ENCODE measurements at regions of chr4 and their contacts with region 1.

Region 1: GRCh38 chr4:112704991-112705845 is 68.3 kb downstream of the LARP7 start:
- DNase-seq: peak; percentile 36 to 73 (median 61)
- ATAC-seq: peak; percentile 36 to 83 (median 79)
- H3K4me3 ChIP-seq: peak overlapping the region in 11 of 12 donors; percentile 21 to 92 (median 62)
- H3K27ac ChIP-seq: peak overlapping the region in 9 of 12 donors; percentile 51 to 85 (median 68)
- H3K4me1 ChIP-seq: peaks cover 0 to 17% (median 6%) of the 10 kb centered on the region in 12 donors
- H3K27me3 ChIP-seq: peaks cover 0 to 52% (median 6%) of the 10 kb centered on the region in 9 donors
- CTCF ChIP-seq: no peak
- POLR2A ChIP-seq: no peak

Region 2: DNA sequence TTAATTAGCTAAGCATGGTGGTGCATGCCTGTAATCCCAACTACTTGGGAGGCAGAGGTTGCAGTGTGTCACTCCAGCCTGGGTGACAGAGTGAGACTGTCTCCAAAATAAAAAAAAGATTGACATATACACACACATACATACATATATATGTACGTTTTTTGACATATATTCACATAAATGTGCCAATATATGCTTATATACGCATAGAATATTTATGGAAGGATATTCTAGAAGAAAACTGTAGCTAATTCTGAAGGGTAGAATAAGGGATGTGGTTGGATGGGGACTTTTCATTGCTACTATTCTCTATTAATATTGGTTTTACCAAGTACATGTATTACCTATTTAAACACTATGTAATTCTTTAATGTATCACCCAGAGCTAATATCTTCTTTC is 88.2 kb before region 1 on chr4:
- intact Hi-C with region 1: no loop called
- DNase-seq: no peak
- ATAC-seq: no peak
- H3K4me3 ChIP-seq: no peak overlapping the region
- H3K27ac ChIP-seq: no peak overlapping the region
- H3K4me1 ChIP-seq: no peaks in the 10 kb centered on the region
- H3K27me3 ChIP-seq: no peaks in the 10 kb centered on the region
- CTCF ChIP-seq: no peak
- POLR2A ChIP-seq: no peak

Region 3: GRCh38 chr4:112674376-112674775 is 30.8 kb before region 1 on chr4:
- intact Hi-C with region 1: loop called in 3 of 10 experiments (anchors 5 kb)
- DNase-seq: no peak
- ATAC-seq: no peak
- H3K4me3 ChIP-seq: no peak overlapping the region
- H3K27ac ChIP-seq: peak overlapping the region in 6 of 12 donors; percentile 8 to 94 (median 73)
- H3K4me1 ChIP-seq: peaks cover 0 to 26% (median 3%) of the 10 kb centered on the region in 12 donors
- H3K27me3 ChIP-seq: no peaks in the 10 kb centered on the region
- CTCF ChIP-seq: no peak
- POLR2A ChIP-seq: no peak

Region 4: GRCh38 chr4:112693507-112693906 is 11.7 kb before region 1 on chr4:
- intact Hi-C with region 1: loop called in 1 of 10 experiments (anchors 2 kb)
- DNase-seq: no peak
- ATAC-seq: no peak
- H3K4me3 ChIP-seq: no peak overlapping the region
- H3K27ac ChIP-seq: no peak overlapping the region
- H3K4me1 ChIP-seq: no peaks in the 10 kb centered on the region
- H3K27me3 ChIP-seq: no peaks in the 10 kb centered on the region
- CTCF ChIP-seq: no peak
- POLR2A ChIP-seq: no peak

Measured in heart left ventricle (tissue), 16 donors.